ENCODE measurements at regions of chr2 and their contacts with region 1.

Region 1: GRCh38 chr2:232600053-232600773 is 33.2 kb upstream of the EFHD1 start:
- DNase-seq: no peak
- ATAC-seq: no peak
- H3K4me3 ChIP-seq: no peak overlapping the region
- H3K4me3 Mint-ChIP-seq: no peak overlapping the region
- H3K27ac ChIP-seq: no peak overlapping the region
- H3K27ac Mint-ChIP-seq: no peak overlapping the region
- H3K4me1 ChIP-seq: no peaks in the 10 kb centered on the region
- H3K4me1 Mint-ChIP-seq: no peaks in the 10 kb centered on the region
- H3K27me3 ChIP-seq: no peaks in the 10 kb centered on the region
- H3K27me3 Mint-ChIP-seq: peaks cover 11% of the 10 kb centered on the region
- CTCF ChIP-seq: no peak

Region 2: DNA sequence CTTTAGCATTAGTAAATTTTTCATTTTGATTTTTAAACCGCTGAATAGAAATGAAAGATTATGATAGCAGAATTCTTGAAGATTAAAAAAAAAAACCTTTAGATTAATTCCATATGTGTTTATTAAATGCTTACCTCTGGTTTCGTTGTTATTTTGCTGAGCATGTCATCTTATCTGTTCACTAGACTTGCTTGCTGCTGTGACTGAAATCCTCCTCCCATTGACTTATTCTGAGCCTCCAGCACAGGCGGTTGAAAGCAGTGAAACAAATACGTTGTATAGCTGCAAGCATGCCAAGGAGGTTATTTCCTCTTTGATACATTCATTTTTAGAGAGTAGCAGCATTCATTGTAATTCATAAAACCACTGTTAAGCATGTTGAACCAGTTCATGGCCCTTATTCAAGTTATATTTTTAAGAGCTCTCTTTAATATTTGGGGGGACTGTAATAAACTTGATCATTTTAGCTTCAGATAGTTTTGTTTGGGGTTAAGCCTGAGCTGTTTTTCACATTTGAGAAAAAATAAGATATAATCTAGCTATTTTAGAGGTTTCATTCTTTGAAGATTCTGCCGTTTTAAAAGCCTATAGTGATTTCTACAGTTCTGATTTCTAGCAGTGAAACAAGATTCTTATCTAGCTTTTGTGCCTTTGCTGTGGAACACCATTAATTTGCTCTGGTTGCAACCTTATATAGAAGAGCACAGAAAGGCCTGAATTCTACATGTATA is 1475.2 kb before region 1 on chr2 and contains the start of gene HTR2B:
- CTCF ChIA-PET with region 1: no interaction called
- POLR2A ChIA-PET with region 1: no interaction called
- intact Hi-C with region 1: no loop called
- DNase-seq: no peak
- ATAC-seq: no peak
- H3K4me3 ChIP-seq: no peak within 1 kb of the TSS
- H3K4me3 Mint-ChIP-seq: no peak within 1 kb of the TSS
- H3K27ac ChIP-seq: no peak within 1 kb of the TSS
- H3K27ac Mint-ChIP-seq: no peak within 1 kb of the TSS
- H3K4me1 ChIP-seq: no peaks in the 10 kb centered on the region
- H3K4me1 Mint-ChIP-seq: peaks cover 3% of the 10 kb centered on the region
- H3K27me3 ChIP-seq: no peaks in the 10 kb centered on the region
- H3K27me3 Mint-ChIP-seq: no peaks in the 10 kb centered on the region
- CTCF ChIP-seq: no peak
- total RNA-seq, gene HTR2B: not detected in 2 replicates

Region 3: GRCh38 chr2:232611061-232611460 is 10.8 kb after region 1 on chr2:
- CTCF ChIA-PET with region 1: no interaction called
- POLR2A ChIA-PET with region 1: no interaction called
- intact Hi-C with region 1: no loop called
- DNase-seq: no peak
- ATAC-seq: no peak
- H3K4me3 ChIP-seq: no peak overlapping the region
- H3K4me3 Mint-ChIP-seq: no peak overlapping the region
- H3K27ac ChIP-seq: no peak overlapping the region
- H3K27ac Mint-ChIP-seq: no peak overlapping the region
- H3K4me1 ChIP-seq: peaks cover 0 to 4% of the 10 kb centered on the region in 2 donors
- H3K4me1 Mint-ChIP-seq: peaks cover 2% of the 10 kb centered on the region
- H3K27me3 ChIP-seq: peaks cover 0 to 2% (median 0%) of the 10 kb centered on the region in 4 experiments
- H3K27me3 Mint-ChIP-seq: peaks cover 2% of the 10 kb centered on the region
- CTCF ChIP-seq: no peak

Region 4: DNA sequence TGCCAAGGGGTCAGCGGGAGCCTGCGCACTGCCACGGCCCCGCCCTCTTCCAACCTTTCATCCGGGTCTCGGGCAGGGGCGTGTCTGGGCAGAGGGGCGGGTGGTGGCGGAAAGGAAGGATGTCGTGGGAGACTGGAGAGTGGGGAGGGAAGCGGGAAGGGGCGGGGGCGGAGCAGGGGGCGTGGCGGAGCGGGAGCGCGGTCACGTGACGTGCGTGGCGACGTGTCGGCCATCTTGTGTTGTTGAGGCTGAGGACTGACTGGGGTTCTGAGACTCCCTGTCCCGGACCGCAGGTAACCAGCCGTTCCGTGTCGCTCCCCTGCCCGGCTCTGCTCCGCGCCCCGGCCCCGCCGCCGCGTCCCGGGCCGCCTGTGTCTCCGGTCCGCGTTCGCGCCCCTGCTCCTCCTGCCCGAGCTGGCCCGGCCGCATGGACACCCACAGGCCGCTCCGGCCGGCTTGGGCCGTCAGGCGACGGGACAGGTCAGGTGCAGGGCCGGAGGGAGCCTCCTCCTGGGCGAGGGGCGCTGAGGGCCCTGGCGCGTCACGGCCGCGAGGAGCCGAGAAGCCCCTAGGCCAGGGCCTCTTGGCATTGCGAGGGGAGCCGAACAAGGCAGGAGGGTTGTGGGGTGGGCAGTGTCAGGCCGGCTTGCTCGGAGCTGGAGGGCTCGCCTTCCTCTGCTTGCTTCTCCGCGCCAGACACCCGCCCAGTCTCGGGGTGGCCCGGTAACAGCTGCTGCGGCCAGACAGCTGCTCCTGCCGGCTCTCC is 97.1 kb after region 1 on chr2 and contains the start of gene GIGYF2:
- CTCF ChIA-PET with region 1: no interaction called
- POLR2A ChIA-PET with region 1: no interaction called
- intact Hi-C with region 1: loop called (anchors 1 kb)
- DNase-seq: peak; percentile 92
- ATAC-seq: peak; percentile 90
- H3K4me3 ChIP-seq: peak within 1 kb of the TSS; percentile 68 to 91 (median 84)
- H3K4me3 Mint-ChIP-seq: peak within 1 kb of the TSS; percentile 95
- H3K27ac ChIP-seq: peak within 1 kb of the TSS; percentile 60 to 92
- H3K27ac Mint-ChIP-seq: peak within 1 kb of the TSS; percentile 86
- H3K4me1 ChIP-seq: peaks cover 19 to 23% of the 10 kb centered on the region in 2 donors
- H3K4me1 Mint-ChIP-seq: peaks cover 38% of the 10 kb centered on the region
- H3K27me3 ChIP-seq: no peaks in the 10 kb centered on the region
- H3K27me3 Mint-ChIP-seq: no peaks in the 10 kb centered on the region
- CTCF ChIP-seq: no peak
- total RNA-seq, gene GIGYF2: 108 and 110 TPM in 2 replicates

Measured in B cell (primary cell).